Heart right ventricle (tissue), 16 donors: ENCODE measurements at regions of chr2 and their contacts with region 1.

Region 1: GRCh38 chr2:231597014-231597611 is 4.4 kb downstream of the TEX44 start:
- DNase-seq: peak; percentile 46 to 47
- ATAC-seq: peak; percentile 40 to 86 (median 68)
- H3K4me3 ChIP-seq: no peak overlapping the region
- H3K27ac ChIP-seq: peak overlapping the region in 5 of 10 donors; percentile 7 to 55 (median 40)
- H3K4me1 ChIP-seq: peaks cover 0 to 22% (median 11%) of the 10 kb centered on the region in 9 donors
- H3K27me3 ChIP-seq: no peaks in the 10 kb centered on the region
- CTCF ChIP-seq: no peak

Region 2: GRCh38 chr2:231563378-231563961 is 33.6 kb before region 1 on chr2:
- intact Hi-C with region 1: loop called (anchors 1 to 5 kb)
- DNase-seq: peak; percentile 34 to 46
- ATAC-seq: peak; percentile 59 to 93 (median 76)
- H3K4me3 ChIP-seq: no peak overlapping the region
- H3K27ac ChIP-seq: no peak overlapping the region
- H3K4me1 ChIP-seq: no peaks in the 10 kb centered on the region
- H3K27me3 ChIP-seq: no peaks in the 10 kb centered on the region
- CTCF ChIP-seq: peak; percentile 36 to 79 (median 73)

Region 3: DNA sequence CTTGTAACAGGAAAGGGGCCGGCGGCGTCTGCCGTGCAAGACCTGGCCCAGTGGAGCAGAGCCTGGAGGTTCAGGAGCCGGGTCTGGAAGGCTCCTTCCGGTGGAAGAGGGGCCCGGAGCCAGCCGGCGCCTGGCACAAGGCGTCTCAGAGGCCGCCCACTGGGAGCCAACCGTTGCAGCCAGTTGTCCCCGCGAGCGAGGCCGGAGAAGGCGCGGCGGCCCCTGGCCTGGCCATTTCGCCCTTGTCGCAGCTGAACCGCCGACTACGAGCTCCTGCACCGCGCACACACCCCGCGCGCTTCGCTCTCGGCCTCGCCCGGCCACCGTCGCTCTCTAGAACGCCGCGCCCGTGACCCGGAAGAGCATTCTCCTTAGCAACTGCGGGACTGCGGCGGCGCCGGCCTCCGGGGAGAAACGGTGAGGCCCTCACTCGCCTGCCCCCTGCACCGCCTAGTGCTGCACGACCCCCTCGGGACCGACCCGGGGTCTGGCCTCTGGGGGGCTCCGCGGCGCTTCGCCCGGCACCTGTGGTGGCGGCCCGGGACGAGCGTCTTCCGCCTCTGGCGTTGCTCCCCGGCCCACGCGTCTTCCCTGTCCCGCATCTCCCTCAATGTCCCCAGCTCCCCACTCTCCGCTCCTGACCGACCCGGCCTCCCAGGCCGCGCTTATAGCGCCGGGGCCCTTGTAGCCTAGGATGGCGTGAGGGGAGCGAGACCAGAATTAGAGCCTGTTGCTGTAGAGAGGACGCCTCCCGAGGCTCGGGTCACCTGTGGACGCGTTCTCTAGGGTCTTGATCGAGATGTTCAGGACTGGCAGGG is 364.4 kb after region 1 on chr2 and contains the start of gene DIS3L2:
- intact Hi-C with region 1: no loop called
- DNase-seq: peak; percentile 81 to 83
- ATAC-seq: peak; percentile 98 to 99 (median 99)
- H3K4me3 ChIP-seq: peak within 1 kb of the TSS; percentile 64 to 100 (median 87)
- H3K27ac ChIP-seq: peak within 1 kb of the TSS; percentile 72 to 95 (median 90)
- H3K4me1 ChIP-seq: peaks cover 5 to 28% (median 24%) of the 10 kb centered on the region in 9 donors
- H3K27me3 ChIP-seq: no peaks in the 10 kb centered on the region
- CTCF ChIP-seq: peak in 1 of 9 donors; percentile 8
- total RNA-seq, gene DIS3L2: 15.2 to 24.5 (median 18.5) TPM